ENCODE measurements at regions of chr16 and their contacts with region 1.

Region 1: GRCh38 chr16:87636072-87636684 is 33.9 kb downstream of the JPH3 start:
- H3K4me3 Mint-ChIP-seq: peak overlapping the region; percentile 63
- H3K27ac Mint-ChIP-seq: no peak overlapping the region
- H3K4me1 Mint-ChIP-seq: peaks cover 18% of the 10 kb centered on the region
- H3K27me3 Mint-ChIP-seq: peaks cover 40% of the 10 kb centered on the region

Region 2: DNA sequence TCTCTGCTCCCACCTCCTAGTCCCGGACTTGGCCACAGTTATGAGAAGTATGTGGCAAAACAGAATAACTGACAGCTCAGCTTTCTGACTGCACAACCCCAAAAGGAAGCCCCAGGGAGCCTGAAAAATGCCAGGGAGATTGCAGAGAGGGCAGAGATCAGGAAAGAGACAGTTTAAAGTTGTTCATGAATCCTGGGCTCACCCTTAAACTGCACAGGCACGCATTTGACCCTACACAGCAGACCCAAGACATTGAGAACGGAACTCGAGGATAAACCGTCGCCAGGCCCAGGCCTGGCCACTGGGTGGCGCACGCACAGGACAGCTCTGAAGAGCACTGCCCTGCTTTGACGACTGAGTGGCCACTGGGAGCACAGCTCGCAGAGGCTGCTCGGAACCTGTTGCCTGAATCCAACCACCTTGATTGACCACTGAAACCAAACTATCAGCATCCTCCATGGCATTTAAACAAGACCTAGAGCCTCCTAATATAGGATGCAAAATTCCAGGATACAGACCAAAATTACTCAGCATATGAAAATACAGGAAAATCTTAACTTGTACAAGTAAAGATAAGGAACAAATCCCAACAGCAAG is 433.0 kb before region 1 on chr16:
- intact Hi-C with region 1: loop called (anchors 5 kb)
- H3K4me3 Mint-ChIP-seq: no peak overlapping the region
- H3K27ac Mint-ChIP-seq: no peak overlapping the region
- H3K4me1 Mint-ChIP-seq: peaks cover 4% of the 10 kb centered on the region
- H3K27me3 Mint-ChIP-seq: peaks cover 7% of the 10 kb centered on the region

Region 3: DNA sequence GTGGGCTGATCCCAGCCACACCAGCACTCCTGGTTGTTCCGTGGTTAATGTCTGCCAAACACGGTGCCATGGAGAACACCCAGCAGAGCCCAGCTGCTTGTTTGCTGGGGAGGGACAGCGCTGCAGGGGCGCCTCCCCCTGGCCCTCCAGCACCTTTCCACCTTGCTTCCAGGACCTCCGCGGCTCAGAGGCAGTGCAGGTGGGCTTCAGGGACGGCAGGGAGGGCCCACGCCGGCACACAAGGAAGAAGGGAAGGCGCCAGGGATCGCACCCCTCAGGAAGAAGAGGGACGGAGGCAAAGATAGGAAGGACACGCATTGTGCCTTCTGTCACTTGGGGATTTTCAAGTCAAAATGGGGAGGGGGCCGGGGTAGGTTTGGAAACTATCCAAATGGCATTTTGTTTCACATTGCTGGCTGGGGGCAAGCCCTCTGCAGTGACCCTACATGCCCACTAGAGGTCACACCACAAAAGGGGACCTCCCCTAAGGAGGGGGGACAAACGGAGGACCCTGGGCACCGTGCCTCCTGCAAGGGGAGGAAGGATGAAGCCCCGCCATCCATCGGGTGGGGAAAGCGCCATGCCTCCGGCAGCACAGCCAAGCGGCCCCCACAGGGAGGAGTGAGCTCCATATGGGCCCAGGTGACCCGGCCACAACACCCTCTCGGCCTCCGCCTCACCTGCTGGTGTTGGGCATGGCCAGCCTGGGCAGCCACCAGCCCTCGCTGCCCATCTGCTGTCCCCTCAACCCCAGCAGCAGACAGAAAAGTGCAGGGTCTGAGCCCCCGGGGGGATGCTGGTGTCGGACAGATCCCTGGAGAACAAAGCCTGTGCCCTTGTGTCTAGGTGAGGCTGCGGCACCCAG is 311.5 kb before region 1 on chr16:
- intact Hi-C with region 1: loop called (anchors 10 kb)
- H3K4me3 Mint-ChIP-seq: no peak overlapping the region
- H3K27ac Mint-ChIP-seq: no peak overlapping the region
- H3K4me1 Mint-ChIP-seq: no peaks in the 10 kb centered on the region
- H3K27me3 Mint-ChIP-seq: peaks cover 3% of the 10 kb centered on the region

Region 4: DNA sequence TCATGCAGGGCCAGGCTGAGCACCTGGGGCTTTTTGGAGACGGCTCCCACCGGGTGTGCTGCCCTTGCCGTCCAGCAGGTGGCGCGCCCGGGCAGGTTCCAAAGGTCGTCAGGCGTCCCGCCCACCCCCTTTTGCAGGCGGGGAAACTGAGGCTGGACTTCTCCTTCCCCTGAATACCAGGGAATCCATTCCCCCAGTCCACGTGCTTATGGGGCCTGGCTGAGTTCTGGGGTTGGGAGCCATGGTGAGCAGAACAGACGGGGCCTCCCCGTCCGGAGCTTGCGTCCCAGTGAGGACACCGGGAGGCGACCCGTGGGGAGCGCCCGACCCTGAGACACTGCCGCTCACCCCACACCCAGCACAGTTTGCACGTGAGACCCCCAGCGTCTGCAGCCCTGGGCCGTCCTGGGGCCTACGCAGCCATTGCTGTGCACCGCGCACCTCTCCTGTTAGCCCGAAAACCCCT is 85.6 kb before region 1 on chr16:
- intact Hi-C with region 1: loop called (anchors 2 kb)
- H3K4me3 Mint-ChIP-seq: no peak overlapping the region
- H3K27ac Mint-ChIP-seq: no peak overlapping the region
- H3K4me1 Mint-ChIP-seq: peaks cover 20% of the 10 kb centered on the region
- H3K27me3 Mint-ChIP-seq: peaks cover 19% of the 10 kb centered on the region